Common myeloid progenitor, CD34-positive (primary cell): ENCODE measurements at regions of chr10 and their contacts with region 1.

Region 1: GRCh38 chr10:84352251-84352842 is 24.0 kb downstream of the CCSER2 start:
- DNase-seq: peak; percentile 63 to 77 (median 74)
- H3K4me3 ChIP-seq: no peak overlapping the region
- H3K27ac ChIP-seq: no peak overlapping the region
- H3K4me1 ChIP-seq: no peaks in the 10 kb centered on the region
- H3K27me3 ChIP-seq: no peaks in the 10 kb centered on the region

Region 2: GRCh38 chr10:84264611-84265141 is 87.7 kb before region 1 on chr10:
- CTCF ChIA-PET with region 1: interaction called, 32 read pairs
- POLR2A ChIA-PET with region 1: no interaction called
- DNase-seq: peak; percentile 58 to 74 (median 68)
- H3K4me3 ChIP-seq: no peak overlapping the region
- H3K27ac ChIP-seq: no peak overlapping the region
- H3K4me1 ChIP-seq: peaks cover 0 to 9% (median 2%) of the 10 kb centered on the region in 4 experiments
- H3K27me3 ChIP-seq: peaks cover 0 to 8% (median 0%) of the 10 kb centered on the region in 5 experiments

Region 3: DNA sequence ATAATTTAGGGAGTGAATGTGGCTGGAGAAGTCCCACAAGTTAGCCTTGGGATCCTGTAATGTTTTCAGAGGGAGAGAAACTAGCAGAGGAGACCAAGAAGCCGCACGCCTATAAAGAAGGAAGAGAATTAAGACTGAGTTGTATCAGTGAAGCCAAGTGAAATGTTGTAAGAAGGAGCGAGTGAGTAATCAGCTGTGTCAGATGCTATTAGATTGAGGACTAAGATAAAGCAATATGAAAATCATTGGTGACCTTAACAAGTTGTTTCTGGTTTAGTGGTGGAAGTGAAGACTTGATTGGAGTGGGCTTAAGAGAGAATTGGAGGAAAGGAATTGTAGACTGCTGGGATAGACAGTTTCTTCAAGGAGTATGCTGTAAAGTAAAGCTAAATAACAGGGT is 15.1 kb before region 1 on chr10:
- CTCF ChIA-PET with region 1: interaction called, 11 read pairs
- POLR2A ChIA-PET with region 1: no interaction called
- DNase-seq: no peak
- H3K4me3 ChIP-seq: no peak overlapping the region
- H3K27ac ChIP-seq: no peak overlapping the region
- H3K4me1 ChIP-seq: peaks cover 0 to 20% (median 3%) of the 10 kb centered on the region in 4 experiments
- H3K27me3 ChIP-seq: no peaks in the 10 kb centered on the region

Region 4: DNA sequence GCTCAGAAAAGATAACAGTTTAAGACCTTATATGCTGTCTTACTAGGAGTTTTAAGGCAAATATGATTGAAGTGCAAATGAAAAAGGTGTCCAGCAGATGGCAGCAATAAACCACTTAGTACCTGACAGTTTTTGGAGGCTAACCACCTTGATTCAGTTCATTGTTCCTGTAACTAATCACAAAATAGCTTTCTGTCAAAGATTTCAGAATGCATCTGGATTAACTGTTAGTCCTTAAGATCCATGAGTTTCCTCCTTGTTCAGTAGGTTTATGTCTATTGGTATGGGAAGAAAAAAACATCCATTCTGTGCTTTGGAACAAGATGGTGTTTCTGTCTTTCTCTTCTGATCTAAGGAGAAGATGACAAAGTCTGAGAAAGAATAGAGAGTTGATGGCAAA is 22.7 kb after region 1 on chr10:
- CTCF ChIA-PET with region 1: interaction called, 10 read pairs
- POLR2A ChIA-PET with region 1: no interaction called
- DNase-seq: peak; percentile 71 to 81 (median 74)
- H3K4me3 ChIP-seq: no peak overlapping the region
- H3K27ac ChIP-seq: no peak overlapping the region
- H3K4me1 ChIP-seq: no peaks in the 10 kb centered on the region
- H3K27me3 ChIP-seq: no peaks in the 10 kb centered on the region

Region 5: DNA sequence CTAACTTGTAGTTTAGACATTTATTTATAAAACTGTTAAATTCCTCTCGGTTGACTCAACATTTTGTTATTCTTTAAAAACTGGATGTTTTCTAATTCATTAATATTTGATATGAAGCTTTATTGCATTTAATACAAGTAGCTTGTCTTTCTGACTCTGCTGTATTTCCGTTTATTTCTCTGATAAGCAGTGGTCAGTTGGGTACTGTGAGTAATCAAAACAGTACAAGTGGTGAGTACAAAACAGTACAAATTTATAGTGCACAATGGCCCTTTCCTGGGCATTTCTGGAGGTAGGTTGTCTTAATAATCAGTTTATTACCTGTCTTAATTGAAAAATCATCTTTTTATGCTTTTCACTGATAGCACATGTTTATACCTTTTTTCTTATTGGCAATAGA is 158.8 kb after region 1 on chr10:
- CTCF ChIA-PET with region 1: no interaction called
- POLR2A ChIA-PET with region 1: no interaction called
- DNase-seq: no peak
- H3K4me3 ChIP-seq: no peak overlapping the region
- H3K27ac ChIP-seq: no peak overlapping the region
- H3K4me1 ChIP-seq: no peaks in the 10 kb centered on the region
- H3K27me3 ChIP-seq: no peaks in the 10 kb centered on the region

Region 6: DNA sequence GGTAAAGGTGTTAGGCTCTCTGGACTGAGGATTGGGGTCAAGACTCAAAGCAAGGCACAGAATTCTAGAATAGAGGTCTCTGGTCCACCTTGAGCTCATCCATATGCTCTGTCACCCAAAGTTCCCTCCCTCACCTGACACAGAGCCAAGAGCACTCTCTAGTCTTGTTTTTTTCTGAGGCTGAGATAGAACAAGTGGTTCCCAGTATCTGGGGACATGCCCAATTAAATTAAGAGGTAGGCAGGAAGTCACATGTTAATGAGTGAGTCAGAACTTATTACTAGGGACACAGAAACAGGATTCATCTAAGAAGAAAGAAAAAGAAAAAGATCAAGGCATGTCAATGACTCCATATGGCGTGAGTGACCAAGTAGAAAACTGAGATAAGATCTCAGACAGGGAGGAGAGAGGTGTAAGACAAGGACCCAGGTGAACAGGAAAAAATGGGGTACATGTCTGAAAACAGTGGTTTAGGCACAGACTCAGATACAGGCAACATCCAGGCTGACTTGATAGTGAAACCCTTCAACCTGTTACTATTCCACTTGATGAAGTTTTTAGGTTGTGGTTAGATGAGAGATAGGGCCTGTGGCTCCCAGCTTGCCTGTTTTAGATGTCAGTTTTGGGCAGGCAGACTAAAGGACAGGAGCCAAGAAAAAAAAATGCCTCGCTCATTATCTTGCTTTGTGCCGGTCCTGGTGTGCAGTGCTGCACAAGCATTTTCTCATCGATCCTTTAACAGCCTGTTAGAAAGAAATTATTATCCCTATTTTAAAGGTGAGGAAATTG is 586.0 kb after region 1 on chr10:
- CTCF ChIA-PET with region 1: no interaction called
- POLR2A ChIA-PET with region 1: no interaction called
- DNase-seq: no peak
- H3K4me3 ChIP-seq: no peak overlapping the region
- H3K27ac ChIP-seq: no peak overlapping the region
- H3K4me1 ChIP-seq: no peaks in the 10 kb centered on the region
- H3K27me3 ChIP-seq: no peaks in the 10 kb centered on the region